ENCODE measurements at regions of chr16 and their contacts with region 1.

Region 1: GRCh38 chr16:67486805-67487204 is 3.5 kb upstream of the AGRP start:
- DNase-seq: no peak
- H3K4me3 ChIP-seq: no peak overlapping the region
- H3K27ac ChIP-seq: no peak overlapping the region
- H3K4me1 ChIP-seq: no peaks in the 10 kb centered on the region
- H3K27me3 ChIP-seq: no peaks in the 10 kb centered on the region
- CTCF ChIP-seq: no peak
- POLR2A ChIP-seq: no peak

Region 2: GRCh38 chr16:67517661-67518423 is 31.0 kb after region 1 on chr16:
- intact Hi-C with region 1: loop called (anchors 2 kb)
- DNase-seq: no peak
- H3K4me3 ChIP-seq: no peak overlapping the region
- H3K27ac ChIP-seq: peak overlapping the region in 1 of 2 donors; percentile 46
- H3K4me1 ChIP-seq: no peaks in the 10 kb centered on the region
- H3K27me3 ChIP-seq: no peaks in the 10 kb centered on the region
- CTCF ChIP-seq: no peak
- POLR2A ChIP-seq: no peak

Region 3: DNA sequence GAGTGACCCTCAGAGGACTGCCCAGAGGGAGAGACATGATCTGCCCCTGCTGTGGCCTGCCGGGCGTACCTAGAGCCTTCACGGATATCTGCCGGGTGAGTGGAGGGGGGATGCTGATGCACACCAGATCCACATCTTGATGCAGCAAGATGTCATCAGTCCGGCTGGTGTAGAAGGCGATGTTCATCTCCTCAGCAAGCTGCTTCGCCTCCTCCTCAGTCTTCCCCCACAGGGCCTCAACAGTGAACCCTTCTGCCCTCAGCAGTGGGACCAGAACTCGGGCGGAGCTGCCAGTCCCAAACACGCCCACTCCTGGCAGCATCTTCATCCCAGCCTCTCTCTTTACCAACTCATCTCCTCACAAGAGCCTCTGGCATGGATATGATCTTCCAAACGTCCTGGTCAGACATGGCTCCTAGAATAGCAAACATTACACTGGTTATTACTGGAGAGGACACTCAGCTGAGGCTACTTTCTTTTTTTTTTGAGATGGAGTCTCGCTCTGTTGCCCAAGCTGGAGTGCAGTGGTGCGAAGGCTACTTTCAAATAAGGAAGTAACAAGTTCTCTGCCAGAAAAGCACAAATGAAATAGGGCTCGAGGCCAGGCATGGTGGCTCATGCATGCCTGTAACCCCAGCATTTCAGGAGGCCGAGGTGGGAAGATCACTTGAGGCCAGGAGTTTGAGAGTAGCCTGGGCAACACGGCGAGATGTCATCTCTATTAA is 198.7 kb after region 1 on chr16:
- intact Hi-C with region 1: no loop called
- DNase-seq: no peak
- H3K4me3 ChIP-seq: no peak overlapping the region
- H3K27ac ChIP-seq: peak overlapping the region in 1 of 2 donors; percentile 42
- H3K4me1 ChIP-seq: no peaks in the 10 kb centered on the region
- H3K27me3 ChIP-seq: no peaks in the 10 kb centered on the region
- CTCF ChIP-seq: no peak
- POLR2A ChIP-seq: no peak

Measured in uterus (tissue), 4 donors.